ENCODE measurements at regions of chr7 and their contacts with region 1.

Region 1: GRCh38 chr7:3154912-3155494 is 111.3 kb upstream of the CARD11 start:
- DNase-seq: no peak
- ATAC-seq: peak; percentile 84
- H3K4me3 Mint-ChIP-seq: no peak overlapping the region
- H3K27ac Mint-ChIP-seq: no peak overlapping the region
- H3K4me1 Mint-ChIP-seq: peaks cover 36% of the 10 kb centered on the region
- H3K27me3 Mint-ChIP-seq: peaks cover 2% of the 10 kb centered on the region
- CTCF ChIP-seq: peak; percentile 47

Region 2: DNA sequence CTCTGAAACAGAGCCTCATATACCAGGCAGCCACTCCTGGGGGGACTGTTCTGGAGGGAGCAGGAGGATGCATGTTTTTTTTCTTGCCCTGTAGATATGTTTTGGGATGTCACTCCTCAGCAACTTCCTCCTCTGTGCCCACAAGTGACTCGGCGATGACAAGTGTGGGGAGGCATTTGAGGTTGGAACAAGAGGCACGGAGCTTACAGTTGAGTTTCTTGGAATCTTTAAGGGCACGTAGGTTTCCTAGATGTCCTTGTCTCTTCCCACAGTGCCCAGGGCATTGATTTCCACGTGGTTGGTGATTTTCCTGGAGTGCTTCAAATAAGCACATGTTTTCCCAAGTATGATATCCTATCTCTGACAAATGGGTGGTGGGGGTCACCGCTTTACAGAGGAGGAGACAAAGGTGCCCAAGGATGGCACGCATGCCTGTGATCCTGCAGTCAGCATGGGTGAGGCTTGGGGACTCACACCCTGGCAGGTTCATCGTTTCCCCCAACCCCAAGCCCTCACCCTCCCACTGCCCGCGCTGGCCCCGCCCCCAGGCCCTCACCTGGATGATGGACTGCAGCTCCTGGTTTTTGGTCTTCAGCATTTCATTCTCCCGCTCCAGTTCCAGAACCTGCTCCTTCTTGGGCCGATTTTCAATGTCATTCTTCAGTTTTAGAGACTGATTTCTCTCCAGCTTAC is 215.7 kb before region 1 on chr7:
- CTCF ChIA-PET with region 1: no interaction called
- POLR2A ChIA-PET with region 1: interaction called, 17 read pairs
- intact Hi-C with region 1: no loop called
- DNase-seq: no peak
- ATAC-seq: no peak
- H3K4me3 Mint-ChIP-seq: no peak overlapping the region
- H3K27ac Mint-ChIP-seq: no peak overlapping the region
- H3K4me1 Mint-ChIP-seq: peaks cover 11% of the 10 kb centered on the region
- H3K27me3 Mint-ChIP-seq: no peaks in the 10 kb centered on the region
- CTCF ChIP-seq: no peak

Region 3: GRCh38 chr7:2954433-2954853 is 200.6 kb before region 1 on chr7:
- CTCF ChIA-PET with region 1: no interaction called
- POLR2A ChIA-PET with region 1: no interaction called
- intact Hi-C with region 1: loop called (anchors 5 kb)
- DNase-seq: no peak
- ATAC-seq: peak; percentile 53
- H3K4me3 Mint-ChIP-seq: peak overlapping the region; percentile 19
- H3K27ac Mint-ChIP-seq: peak overlapping the region; percentile 70
- H3K4me1 Mint-ChIP-seq: peaks cover 63% of the 10 kb centered on the region
- H3K27me3 Mint-ChIP-seq: no peaks in the 10 kb centered on the region
- CTCF ChIP-seq: no peak

Region 4: GRCh38 chr7:3092468-3092867 is 62.5 kb before region 1 on chr7:
- CTCF ChIA-PET with region 1: interaction called, 3 read pairs
- POLR2A ChIA-PET with region 1: interaction called, 3 read pairs
- intact Hi-C with region 1: loop called (anchors 2 kb)
- DNase-seq: peak; percentile 54
- ATAC-seq: peak; percentile 84
- H3K4me3 Mint-ChIP-seq: peak overlapping the region; percentile 15
- H3K27ac Mint-ChIP-seq: peak overlapping the region; percentile 83
- H3K4me1 Mint-ChIP-seq: peaks cover 52% of the 10 kb centered on the region
- H3K27me3 Mint-ChIP-seq: no peaks in the 10 kb centered on the region
- CTCF ChIP-seq: no peak

Measured in activated B cell treated with CpG ODN at 0.5 μM for 24 hours (primary cell).